ENCODE measurements at regions of chr1 and their contacts with region 1.

Region 1: DNA sequence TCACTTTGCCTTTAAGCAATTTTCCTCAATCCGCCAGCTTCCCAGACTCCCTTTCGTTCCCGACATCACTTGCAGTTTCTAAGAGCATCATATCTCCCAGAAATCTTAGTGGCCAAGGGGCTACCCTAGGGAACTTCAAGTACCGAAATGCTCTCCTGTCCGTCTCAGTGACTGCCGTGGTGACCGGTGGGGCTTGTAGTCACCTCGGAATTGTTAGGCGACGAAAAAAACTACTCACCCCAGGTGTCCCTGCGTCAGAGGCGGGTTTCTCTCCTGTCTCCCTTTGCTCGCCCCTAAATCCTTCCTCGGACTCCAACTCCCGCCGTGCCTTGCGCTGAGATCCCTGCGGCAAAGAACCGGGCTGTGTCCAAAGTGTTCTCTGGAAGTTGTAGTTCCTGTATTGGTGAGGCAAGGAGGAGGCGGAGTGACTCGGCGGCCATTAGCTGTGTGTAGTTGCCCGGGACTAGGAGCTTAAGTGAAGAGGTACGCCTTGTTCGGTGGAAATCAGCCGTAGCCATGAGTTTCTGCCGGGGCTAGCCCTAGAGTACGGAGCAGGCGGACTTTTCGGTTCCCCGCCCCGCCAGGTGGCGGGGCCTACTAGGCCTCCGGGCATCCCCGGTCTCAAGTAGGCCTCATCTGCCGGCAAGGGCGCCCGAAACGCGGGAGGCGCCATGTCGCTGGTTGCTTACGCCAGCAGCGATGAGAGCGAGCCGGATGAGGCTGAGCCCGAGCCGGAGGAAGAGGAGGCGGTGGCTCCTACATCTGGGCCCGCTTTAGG is at the start of gene PRCC:
- DNase-seq: peak; percentile 83 to 99 (median 98)
- ATAC-seq: peak; percentile 92 to 93
- H3K4me3 Mint-ChIP-seq: no peak within 1 kb of the TSS
- H3K27ac Mint-ChIP-seq: peak within 1 kb of the TSS in 1 of 10 donors; percentile 71
- H3K4me1 Mint-ChIP-seq: peaks cover 25 to 40% (median 37%) of the 10 kb centered on the region in 4 donors
- H3K27me3 Mint-ChIP-seq: no peaks in the 10 kb centered on the region
- polyA plus RNA-seq, gene PRCC: 22.9 to 55.7 (median 39.9) TPM

Region 2: DNA sequence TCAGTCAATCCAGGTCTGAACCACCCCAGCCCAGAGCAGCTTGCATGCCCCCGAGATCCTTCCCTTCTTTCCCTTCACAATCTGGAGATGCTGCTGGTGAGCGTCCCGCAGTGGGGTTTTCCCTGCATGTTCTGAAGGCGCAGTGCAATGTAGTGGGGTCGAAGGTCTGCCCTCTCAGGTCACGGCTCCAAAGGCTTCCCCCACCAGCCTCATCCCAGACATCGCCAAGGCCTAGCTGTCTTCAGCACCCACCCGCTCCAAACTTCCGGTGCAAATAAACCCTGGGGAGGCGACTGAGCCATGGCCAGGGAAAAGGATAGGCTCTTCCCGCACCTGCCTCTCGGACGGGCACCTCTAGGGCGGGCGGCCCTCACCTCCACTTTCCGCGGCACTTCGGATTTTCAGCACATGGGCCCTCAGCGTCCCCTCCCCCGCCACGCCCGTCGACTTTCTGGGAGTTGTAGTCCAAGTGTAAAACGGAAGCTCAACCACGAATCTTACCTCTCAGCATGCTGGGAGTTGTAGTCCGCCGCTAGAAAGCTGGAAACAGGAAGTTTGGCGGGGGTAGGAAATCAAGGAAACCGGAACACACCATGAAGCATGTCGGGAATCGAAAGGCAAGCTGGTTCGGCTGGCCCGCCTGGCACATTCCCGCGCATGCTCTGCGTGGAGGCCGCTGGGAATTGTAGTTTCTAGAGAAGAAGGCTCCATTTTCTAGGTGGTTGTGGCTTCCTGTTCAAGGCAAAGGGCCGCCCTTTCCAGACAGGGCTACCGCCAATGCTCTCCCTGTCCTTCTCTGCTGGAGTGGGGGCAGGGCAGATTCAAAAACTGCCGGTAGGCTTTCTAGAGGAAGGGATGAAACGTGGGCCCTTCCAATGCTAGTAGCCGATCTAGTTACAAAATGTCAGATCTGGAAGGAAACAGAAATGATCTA is 26.3 kb before region 1 on chr1 and contains the start of gene MRPL24:
- POLR2A ChIA-PET with region 1: interaction called, 104 read pairs
- DNase-seq: peak; percentile 85 to 99 (median 96)
- ATAC-seq: peak; percentile 87 to 89
- H3K4me3 Mint-ChIP-seq: peak within 1 kb of the TSS; percentile 92 to 99 (median 96)
- H3K27ac Mint-ChIP-seq: peak within 1 kb of the TSS; percentile 94 to 99 (median 98)
- H3K4me1 Mint-ChIP-seq: peaks cover 18 to 47% (median 45%) of the 10 kb centered on the region in 4 donors
- H3K27me3 Mint-ChIP-seq: no peaks in the 10 kb centered on the region
- polyA plus RNA-seq, gene MRPL24: 98.6 to 109 (median 103) TPM

Measured in naive thymus-derived CD8-positive, alpha-beta T cell (primary cell).